ENCODE measurements at regions of chr7 and their contacts with region 1.

Region 1: GRCh38 chr7:42940985-42941847 is 9.0 kb downstream of the MRPL32 start:
- DNase-seq: peak; percentile 66
- ATAC-seq: peak; percentile 93
- H3K4me3 ChIP-seq: no peak overlapping the region
- H3K27ac ChIP-seq: no peak overlapping the region
- H3K4me1 ChIP-seq: no peaks in the 10 kb centered on the region
- H3K27me3 ChIP-seq: no peaks in the 10 kb centered on the region; the same call in 1 of the 2 replicates
- CTCF ChIP-seq: peak; percentile 97

Region 2: GRCh38 chr7:43108255-43109011 is 167.2 kb after region 1 on chr7:
- CTCF ChIA-PET with region 1: no interaction called
- POLR2A ChIA-PET with region 1: no interaction called
- in situ Hi-C with region 1: no loop called
- intact Hi-C with region 1: loop called (anchors 10 kb)
- DNase-seq: peak; percentile 47
- ATAC-seq: peak; percentile 95
- H3K4me3 ChIP-seq: no peak overlapping the region
- H3K27ac ChIP-seq: no peak overlapping the region
- H3K4me1 ChIP-seq: no peaks in the 10 kb centered on the region
- H3K27me3 ChIP-seq: peaks cover 21% of the 10 kb centered on the region
- CTCF ChIP-seq: peak; percentile 95

Region 3: DNA sequence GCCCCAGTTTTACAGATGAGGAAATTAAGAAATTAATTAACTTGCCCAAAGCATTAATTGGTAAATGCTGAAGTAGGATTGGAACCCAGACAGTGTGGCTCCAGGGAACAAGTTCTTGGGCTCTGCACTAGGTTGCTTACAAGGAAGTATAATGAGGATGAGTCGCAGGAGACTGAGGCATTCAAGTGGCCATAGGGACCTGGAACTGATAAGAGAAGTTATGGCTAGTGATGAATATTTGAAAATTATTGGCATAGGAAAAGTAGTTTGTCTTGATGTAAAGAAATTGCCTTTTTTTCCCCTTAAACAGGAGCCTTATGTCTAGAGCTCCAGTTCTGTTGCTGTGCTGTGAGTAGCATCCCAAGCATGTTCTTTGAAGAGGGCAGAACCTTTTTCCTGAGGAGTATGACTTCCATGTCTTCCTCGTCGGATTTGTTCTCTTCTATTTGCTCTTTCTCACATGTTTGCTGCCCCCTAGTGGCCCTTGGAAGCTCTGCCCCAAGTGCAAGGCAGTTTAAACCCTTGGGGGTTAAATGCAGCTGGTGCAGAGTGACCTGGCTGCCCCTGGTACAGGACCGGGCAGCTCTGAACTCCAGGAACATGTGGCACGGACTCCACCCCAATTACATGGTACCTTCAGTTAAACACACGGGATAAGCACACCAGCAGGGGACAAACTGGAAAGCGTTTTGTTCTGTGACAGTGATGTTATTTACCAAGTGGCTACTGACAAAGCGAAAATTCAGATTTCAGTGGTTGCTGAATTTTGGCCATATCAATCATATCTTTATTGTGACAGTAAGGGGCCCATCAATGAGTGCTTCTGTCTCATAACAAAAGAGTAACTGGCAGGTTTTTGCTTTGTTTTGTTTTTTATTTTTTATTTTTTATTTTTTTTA is 320.0 kb after region 1 on chr7:
- CTCF ChIA-PET with region 1: interaction called, 5 read pairs
- POLR2A ChIA-PET with region 1: no interaction called
- in situ Hi-C with region 1: no loop called
- intact Hi-C with region 1: loop called (anchors 1 kb)
- DNase-seq: peak; percentile 65
- ATAC-seq: peak; percentile 98
- H3K4me3 ChIP-seq: no peak overlapping the region
- H3K27ac ChIP-seq: no peak overlapping the region
- H3K4me1 ChIP-seq: no peaks in the 10 kb centered on the region; the same call in 1 of the 2 replicates
- H3K27me3 ChIP-seq: no peaks in the 10 kb centered on the region
- CTCF ChIP-seq: peak; percentile 96

Region 4: DNA sequence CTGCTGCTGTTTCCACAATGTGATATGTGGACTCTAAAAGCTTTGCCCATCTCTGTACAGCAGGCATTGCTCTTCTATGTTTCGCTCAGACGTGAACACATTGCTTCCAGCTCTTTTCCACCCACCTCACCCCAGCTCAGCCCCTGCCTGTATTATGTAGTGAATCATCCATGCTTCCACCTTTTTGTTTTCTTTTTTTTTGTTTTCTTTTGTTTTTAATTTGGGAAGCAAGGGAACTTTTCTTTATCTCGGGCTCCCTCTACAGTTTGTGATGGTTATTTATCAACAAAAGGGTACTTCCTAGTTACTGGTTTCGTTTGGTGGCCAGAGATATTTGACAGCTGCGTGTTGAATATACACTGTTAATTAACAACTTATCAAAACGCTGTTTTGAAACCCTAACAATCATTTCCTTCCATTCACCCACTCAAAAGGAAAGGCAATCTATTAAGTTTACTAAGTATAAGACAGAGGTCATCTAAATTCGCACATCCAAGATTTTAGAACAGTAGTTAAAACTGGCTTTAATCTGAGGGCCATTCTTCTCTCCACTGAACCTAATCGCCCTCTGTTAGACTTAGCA is 513.8 kb after region 1 on chr7:
- CTCF ChIA-PET with region 1: no interaction called
- POLR2A ChIA-PET with region 1: no interaction called
- in situ Hi-C with region 1: no loop called
- intact Hi-C with region 1: loop called (anchors 5 kb)
- DNase-seq: no peak
- ATAC-seq: peak; percentile 76; the same call in 1 of the 2 replicates
- H3K4me3 ChIP-seq: no peak overlapping the region
- H3K27ac ChIP-seq: no peak overlapping the region
- H3K4me1 ChIP-seq: no peaks in the 10 kb centered on the region
- H3K27me3 ChIP-seq: peaks cover 33% of the 10 kb centered on the region
- CTCF ChIP-seq: peak; percentile 80

Region 5: GRCh38 chr7:43546231-43546630 is 605.0 kb after region 1 on chr7:
- CTCF ChIA-PET with region 1: no interaction called
- POLR2A ChIA-PET with region 1: no interaction called
- in situ Hi-C with region 1: no loop called
- intact Hi-C with region 1: no loop called
- DNase-seq: no peak
- ATAC-seq: no peak
- H3K4me3 ChIP-seq: no peak overlapping the region
- H3K27ac ChIP-seq: no peak overlapping the region
- H3K4me1 ChIP-seq: no peaks in the 10 kb centered on the region
- H3K27me3 ChIP-seq: peaks cover 34% of the 10 kb centered on the region
- CTCF ChIP-seq: no peak

Region 6: GRCh38 chr7:43729214-43729923 is 788.2 kb after region 1 on chr7 and contains the start of gene COA1:
- CTCF ChIA-PET with region 1: no interaction called
- POLR2A ChIA-PET with region 1: no interaction called
- in situ Hi-C with region 1: no loop called
- intact Hi-C with region 1: loop called (anchors 10 kb)
- DNase-seq: peak; percentile 88
- ATAC-seq: peak; percentile 100
- H3K4me3 ChIP-seq: peak within 1 kb of the TSS; percentile 63 to 99
- H3K27ac ChIP-seq: peak within 1 kb of the TSS; percentile 92
- H3K4me1 ChIP-seq: peaks cover 13% of the 10 kb centered on the region
- H3K27me3 ChIP-seq: no peaks in the 10 kb centered on the region
- CTCF ChIP-seq: no peak
- total RNA-seq, gene COA1: 65.5 TPM

Measured in Panc1 (cell line).